CD8-positive, alpha-beta memory T cell (primary cell): ENCODE measurements at regions of chr10 and their contacts with region 1.

Region 1: DNA sequence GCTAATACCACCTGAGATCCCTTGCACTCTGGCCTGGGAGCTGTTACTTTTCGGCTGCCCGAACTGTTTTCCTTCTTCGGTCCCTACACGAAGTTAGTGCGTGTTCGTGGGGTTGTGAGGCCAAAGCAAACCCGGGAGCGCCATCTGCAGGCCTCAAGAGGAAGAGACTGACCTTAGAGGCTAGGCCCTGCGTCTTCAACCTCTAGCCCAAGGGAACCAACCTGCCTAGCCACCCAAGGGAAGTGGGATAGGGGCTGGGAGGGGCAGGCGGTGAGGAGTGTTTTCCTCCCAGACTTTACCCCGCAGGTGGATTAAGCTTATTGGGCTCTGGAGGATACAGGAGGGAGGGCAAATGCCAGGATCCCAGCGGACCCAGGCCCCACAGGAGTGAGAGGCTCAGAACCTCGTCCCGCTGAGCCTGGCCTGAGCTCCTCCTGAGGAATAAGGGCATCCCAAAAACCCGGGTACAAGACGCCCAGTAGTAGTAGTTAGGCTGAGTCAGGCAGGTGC is 1.7 kb upstream of the PAX2 start:
- DNase-seq: peak in 4 of 5 donors; percentile 5 to 37 (median 21)
- H3K4me3 ChIP-seq: no peak overlapping the region
- H3K4me3 Mint-ChIP-seq: peak overlapping the region in 4 of 7 donors; percentile 23 to 50 (median 34)
- H3K27ac ChIP-seq: no peak overlapping the region
- H3K27ac Mint-ChIP-seq: peak overlapping the region in 1 of 8 donors; percentile 50
- H3K4me1 ChIP-seq: peaks cover 18% of the 10 kb centered on the region
- H3K4me1 Mint-ChIP-seq: peaks cover 26 to 64% (median 35%) of the 10 kb centered on the region in 3 donors
- H3K27me3 ChIP-seq: peaks cover 58% of the 10 kb centered on the region
- H3K27me3 Mint-ChIP-seq: peaks cover 55 to 79% of the 10 kb centered on the region in 2 donors

Region 2: GRCh38 chr10:100562008-100562711 is 181.5 kb before region 1 on chr10:
- CTCF ChIA-PET with region 1: interaction called, 17 read pairs
- POLR2A ChIA-PET with region 1: no interaction called
- DNase-seq: peak; percentile 55 to 76 (median 69)
- H3K4me3 ChIP-seq: peak overlapping the region; percentile 15
- H3K4me3 Mint-ChIP-seq: peak overlapping the region in 6 of 7 donors; percentile 22 to 77 (median 54)
- H3K27ac ChIP-seq: no peak overlapping the region
- H3K27ac Mint-ChIP-seq: peak overlapping the region in 1 of 8 donors; percentile 31
- H3K4me1 ChIP-seq: peaks cover 13% of the 10 kb centered on the region
- H3K4me1 Mint-ChIP-seq: peaks cover 11 to 18% (median 17%) of the 10 kb centered on the region in 3 donors
- H3K27me3 ChIP-seq: peaks cover 16% of the 10 kb centered on the region
- H3K27me3 Mint-ChIP-seq: peaks cover 35 to 40% of the 10 kb centered on the region in 2 donors